ENCODE measurements at regions of chr13 and their contacts with region 1.

Region 1: DNA sequence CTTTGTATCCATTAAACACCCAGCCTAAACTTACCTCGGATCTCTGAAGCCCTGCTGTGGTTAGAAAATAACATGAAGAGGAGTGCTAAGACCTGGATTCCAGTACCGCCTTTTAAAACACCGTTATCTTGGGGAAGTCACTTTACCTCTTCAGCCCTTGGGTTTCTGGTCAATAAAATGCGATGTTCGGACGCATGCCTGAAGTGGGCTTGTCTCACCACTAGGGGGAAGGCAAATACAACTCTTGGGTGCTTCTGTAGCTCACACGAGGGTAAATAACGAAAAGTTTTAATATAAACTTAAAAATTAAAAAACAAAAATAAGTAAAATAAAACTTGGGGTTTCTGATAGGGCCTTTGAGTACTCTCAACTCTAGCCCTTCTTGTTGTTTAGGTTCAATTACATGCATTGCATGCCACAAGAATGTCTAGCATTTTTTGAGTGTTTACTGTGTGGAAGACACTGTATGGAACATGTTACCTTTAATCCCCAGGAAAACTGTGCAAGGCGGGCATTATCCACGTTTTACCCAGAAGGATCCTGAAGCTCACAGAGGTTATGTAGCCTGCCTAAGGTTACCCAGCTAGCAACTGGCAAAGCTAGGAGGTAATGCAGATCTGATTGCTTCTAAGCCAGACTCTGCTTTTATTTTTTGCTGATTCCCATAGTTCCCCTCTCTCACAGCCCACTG is 240.4 kb downstream of the LMO7 start:
- DNase-seq: peak in 2 of 3 donors; percentile 43 to 68
- ATAC-seq: peak; percentile 79
- H3K4me3 ChIP-seq: no peak overlapping the region
- H3K4me1 ChIP-seq: peaks cover 2% of the 10 kb centered on the region
- CTCF ChIP-seq: peak; percentile 78

Region 2: DNA sequence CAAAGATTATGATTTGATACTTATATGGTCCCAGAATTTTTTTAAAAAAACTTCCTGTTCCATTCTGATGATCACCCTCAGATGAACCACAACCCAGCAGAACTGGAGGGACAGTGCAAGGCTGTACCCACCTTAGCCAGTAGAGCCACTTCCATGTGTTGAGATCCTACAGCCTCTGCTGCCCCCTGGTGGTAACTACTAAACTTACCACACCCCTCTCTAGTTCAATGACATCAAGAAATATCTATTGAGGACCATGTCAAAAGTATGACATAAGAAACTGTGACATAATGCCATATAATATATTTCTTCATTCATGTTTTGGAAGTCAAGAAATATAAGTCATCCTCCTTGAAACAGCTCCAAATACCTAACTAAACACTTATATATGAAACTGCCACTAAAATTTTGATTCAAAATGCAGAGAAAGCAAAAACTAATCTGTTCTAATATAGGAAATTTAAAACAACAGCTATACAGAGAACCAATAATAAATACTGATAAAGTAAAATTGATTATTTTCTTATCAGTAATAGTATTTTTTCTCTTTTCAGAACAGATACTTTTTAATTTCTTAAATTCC is 597.1 kb after region 1 on chr13:
- intact Hi-C with region 1: loop called (anchors 2 kb)
- DNase-seq: peak in 2 of 3 donors; percentile 33 to 78
- ATAC-seq: peak; percentile 87
- H3K4me3 ChIP-seq: no peak overlapping the region
- H3K4me1 ChIP-seq: no peaks in the 10 kb centered on the region
- CTCF ChIP-seq: peak; percentile 55

Measured in mucosa of descending colon (tissue), 3 donors.